ENCODE measurements at regions of chr11 and their contacts with region 1.

Region 1: GRCh38 chr11:19121646-19122045 is 4.7 kb downstream of the ZDHHC13 start:
- DNase-seq: no peak
- ATAC-seq: no peak

Region 2: DNA sequence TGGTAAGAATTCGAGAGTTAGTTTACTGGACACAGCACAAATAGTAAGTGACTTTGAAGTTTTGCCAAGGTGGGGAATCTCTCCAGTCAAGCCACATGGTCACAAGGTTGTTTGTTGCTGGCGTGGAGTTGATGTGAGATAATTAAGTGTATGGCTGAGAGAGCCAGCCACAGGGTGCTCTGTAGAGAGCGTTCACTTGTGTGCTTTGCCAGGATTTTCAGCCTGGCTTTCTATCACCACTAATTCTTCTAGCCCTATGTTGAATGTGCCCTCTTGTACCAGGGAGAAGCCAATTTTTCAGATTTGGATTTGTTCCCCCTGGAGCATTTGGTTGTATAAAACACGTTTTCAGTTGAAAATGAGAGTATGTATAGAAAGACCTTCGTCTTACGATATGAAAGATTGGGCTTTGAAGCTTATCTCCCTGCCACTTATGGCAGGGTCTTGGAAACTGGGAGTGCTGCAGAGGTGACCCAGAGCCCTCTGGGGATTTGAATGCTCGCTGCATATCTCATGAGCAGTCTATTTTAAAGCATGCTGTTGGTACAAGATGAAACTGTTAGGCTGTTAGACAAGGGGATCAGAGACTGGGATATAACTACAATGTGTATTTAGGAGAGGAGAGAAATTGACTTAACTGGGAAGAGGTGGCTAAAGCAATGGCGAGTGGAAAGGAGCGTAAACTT is 51.5 kb after region 1 on chr11:
- intact Hi-C with region 1: loop called in 1 of 2 experiments (anchors 5 kb)
- DNase-seq: no peak
- ATAC-seq: peak; percentile 80 to 89

Measured in left cardiac atrium (tissue), 4 donors.